Activated CD4-positive, alpha-beta memory T cell treated with anti-CD3 and anti-CD28 coated beads, Interleukin-2, amount 10 ng/mL, durations not matched to agents 7 days and 5 days (primary cell): ENCODE measurements at regions of chr13 and their contacts with region 1.

Region 1: DNA sequence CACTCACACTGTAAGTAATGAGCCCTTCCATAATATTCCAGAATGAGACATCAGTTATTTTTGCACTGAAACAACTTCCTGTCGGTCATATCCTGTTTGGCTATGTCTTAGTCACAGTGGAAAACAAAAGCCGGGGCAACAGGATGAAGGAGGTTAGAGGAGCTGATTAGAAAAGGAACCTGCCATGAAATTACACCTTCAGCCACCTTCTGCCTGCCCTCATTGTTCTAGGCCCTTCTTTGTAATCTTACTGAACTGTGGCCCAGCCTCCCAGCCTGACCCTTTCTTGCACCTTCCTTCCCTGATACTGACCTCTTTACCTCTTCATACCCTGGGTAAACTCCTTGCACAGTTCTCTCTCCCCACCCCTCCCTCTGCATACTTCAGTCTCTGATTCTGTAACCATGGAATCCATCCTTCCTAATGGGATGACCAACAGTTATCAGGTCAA is 67.3 kb downstream of the DOCK9 start:
- DNase-seq: peak; percentile 59
- H3K4me3 Mint-ChIP-seq: peak overlapping the region; percentile 9
- H3K27ac Mint-ChIP-seq: peak overlapping the region; percentile 95
- H3K4me1 Mint-ChIP-seq: peaks cover 46% of the 10 kb centered on the region
- H3K27me3 Mint-ChIP-seq: no peaks in the 10 kb centered on the region

Region 2: GRCh38 chr13:98875146-98875729 is 35.3 kb before region 1 on chr13:
- CTCF ChIA-PET with region 1: no interaction called
- POLR2A ChIA-PET with region 1: interaction called, 10 read pairs
- DNase-seq: no peak
- H3K4me3 Mint-ChIP-seq: no peak overlapping the region
- H3K27ac Mint-ChIP-seq: peak overlapping the region; percentile 62
- H3K4me1 Mint-ChIP-seq: peaks cover 27% of the 10 kb centered on the region
- H3K27me3 Mint-ChIP-seq: no peaks in the 10 kb centered on the region

Region 3: GRCh38 chr13:98927951-98928927 is 17.7 kb after region 1 on chr13:
- CTCF ChIA-PET with region 1: no interaction called
- POLR2A ChIA-PET with region 1: no interaction called
- DNase-seq: no peak
- H3K4me3 Mint-ChIP-seq: no peak overlapping the region
- H3K27ac Mint-ChIP-seq: no peak overlapping the region
- H3K4me1 Mint-ChIP-seq: no peaks in the 10 kb centered on the region
- H3K27me3 Mint-ChIP-seq: no peaks in the 10 kb centered on the region

Region 4: DNA sequence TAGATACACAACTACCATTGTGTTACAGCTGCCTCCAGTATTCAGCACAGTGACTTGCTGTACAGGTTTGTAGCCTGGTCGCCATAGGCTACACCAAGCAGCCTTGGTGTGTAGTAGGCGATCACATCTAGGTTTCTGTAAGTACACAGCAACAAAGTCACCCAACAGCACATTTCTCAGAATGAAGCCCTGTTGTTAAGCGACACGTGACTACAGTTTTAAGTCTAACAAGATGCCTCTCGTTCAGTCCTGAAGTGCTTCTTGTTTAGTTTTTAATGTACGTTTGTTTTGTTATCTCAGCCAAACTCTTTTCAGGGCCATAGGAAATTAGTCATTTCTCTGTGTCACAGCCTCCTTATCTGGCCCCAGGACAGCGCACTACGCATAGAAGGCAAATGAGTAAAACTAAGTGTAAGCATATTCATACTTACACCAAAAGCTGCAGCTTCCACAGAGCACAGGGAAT is 446.6 kb after region 1 on chr13:
- CTCF ChIA-PET with region 1: no interaction called
- POLR2A ChIA-PET with region 1: no interaction called
- DNase-seq: peak; percentile 70
- H3K4me3 Mint-ChIP-seq: peak overlapping the region; percentile 56
- H3K27ac Mint-ChIP-seq: peak overlapping the region; percentile 96
- H3K4me1 Mint-ChIP-seq: peaks cover 97% of the 10 kb centered on the region
- H3K27me3 Mint-ChIP-seq: no peaks in the 10 kb centered on the region